ENCODE measurements at regions of chr19 and their contacts with region 1.

Region 1: GRCh38 chr19:17025991-17026658 is 485 bp downstream of the CPAMD8 start:
- DNase-seq: peak; percentile 26
- H3K4me3 ChIP-seq: peak overlapping the region in 2 of 4 donors; percentile 16 to 40
- H3K27ac ChIP-seq: no peak overlapping the region
- H3K4me1 ChIP-seq: peaks cover 0 to 14% (median 8%) of the 10 kb centered on the region in 4 donors
- H3K27me3 ChIP-seq: peaks cover 67% of the 10 kb centered on the region
- CTCF ChIP-seq: no peak
- EP300 ChIP-seq: no peak
- POLR2A ChIP-seq: no peak

Region 2: DNA sequence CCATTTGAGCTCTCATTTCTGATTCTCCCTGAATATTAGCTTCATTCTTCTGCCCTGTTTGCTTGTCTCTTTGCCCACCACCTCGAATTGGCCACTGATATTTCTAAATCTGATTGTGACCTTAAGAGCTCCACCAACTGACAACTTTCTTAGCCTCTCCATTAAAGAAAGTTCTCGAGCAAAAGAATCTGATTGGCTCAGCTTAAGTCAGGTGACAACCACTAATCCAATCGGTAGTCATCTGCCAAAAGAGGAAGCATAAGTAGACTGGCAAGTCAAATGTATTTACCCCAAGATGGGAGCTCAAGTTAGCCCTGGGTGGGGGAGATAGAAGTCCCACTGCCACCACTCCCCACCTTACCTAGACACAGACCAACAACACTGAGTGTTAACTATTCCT is 1866.9 kb before region 1 on chr19:
- in situ Hi-C with region 1: no loop called
- intact Hi-C with region 1: loop called (anchors 5 kb)
- DNase-seq: no peak
- H3K4me3 ChIP-seq: no peak overlapping the region
- H3K27ac ChIP-seq: no peak overlapping the region
- H3K4me1 ChIP-seq: no peaks in the 10 kb centered on the region
- H3K27me3 ChIP-seq: no peaks in the 10 kb centered on the region
- CTCF ChIP-seq: no peak
- EP300 ChIP-seq: no peak
- POLR2A ChIP-seq: no peak

Region 3: DNA sequence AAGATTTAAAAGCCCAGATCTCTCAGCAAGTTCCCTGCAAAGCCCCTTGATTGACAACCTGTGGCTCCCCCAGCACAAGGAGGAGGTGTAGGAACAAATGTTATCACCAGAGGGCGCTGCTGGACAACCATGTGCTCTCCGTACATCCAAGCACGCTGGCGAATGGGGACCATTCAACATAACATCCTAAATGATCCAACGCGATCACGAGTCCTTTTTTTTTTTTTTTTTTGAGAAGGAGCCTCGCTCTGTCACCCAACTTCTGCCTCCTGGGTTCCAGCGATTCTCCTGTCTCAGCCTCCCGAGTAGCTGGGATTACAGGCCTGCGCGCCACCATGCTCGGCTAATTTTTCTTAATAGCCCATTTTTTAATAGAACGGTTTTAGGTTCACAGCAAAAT is 254.5 kb before region 1 on chr19:
- in situ Hi-C with region 1: loop called in 1 of 4 experiments (anchors 25 kb)
- intact Hi-C with region 1: no loop called
- DNase-seq: peak; percentile 82
- H3K4me3 ChIP-seq: no peak overlapping the region
- H3K27ac ChIP-seq: no peak overlapping the region
- H3K4me1 ChIP-seq: no peaks in the 10 kb centered on the region
- H3K27me3 ChIP-seq: no peaks in the 10 kb centered on the region
- CTCF ChIP-seq: peak; percentile 84 to 90 (median 86)
- EP300 ChIP-seq: no peak
- POLR2A ChIP-seq: no peak

Measured in transverse colon (tissue), 4 donors.